SK-N-SH (cell line): ENCODE measurements at regions of chr4 and their contacts with region 1.

Region 1: DNA sequence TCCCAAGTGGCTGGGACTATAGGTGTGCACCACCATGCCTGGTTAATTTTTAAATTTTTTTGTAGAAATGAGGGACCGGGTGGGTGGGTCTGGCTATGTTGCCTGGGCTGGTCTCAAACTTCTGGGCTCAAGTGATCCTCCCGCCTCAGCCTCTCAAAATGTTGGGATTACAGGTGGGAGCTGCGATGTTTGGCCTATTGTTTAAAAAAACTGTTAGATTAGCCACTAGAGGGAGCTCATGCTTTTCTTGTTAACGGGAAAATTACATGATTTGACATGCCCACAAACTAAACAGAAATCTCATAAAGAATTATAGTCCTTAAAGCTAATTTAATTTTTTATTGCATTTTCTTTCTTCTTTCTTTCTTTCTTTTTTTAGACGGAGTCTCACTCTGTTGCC is 5.0 kb upstream of the SDAD1 start:
- DNase-seq: peak; percentile 45
- H3K4me3 ChIP-seq: no peak overlapping the region
- H3K27ac ChIP-seq: no peak overlapping the region
- H3K4me1 ChIP-seq: no peaks in the 10 kb centered on the region
- H3K27me3 ChIP-seq: no peaks in the 10 kb centered on the region
- CTCF ChIP-seq: peak; percentile 76
- EP300 ChIP-seq: no peak
- RAD21 ChIP-seq: peak; percentile 74

Region 2: DNA sequence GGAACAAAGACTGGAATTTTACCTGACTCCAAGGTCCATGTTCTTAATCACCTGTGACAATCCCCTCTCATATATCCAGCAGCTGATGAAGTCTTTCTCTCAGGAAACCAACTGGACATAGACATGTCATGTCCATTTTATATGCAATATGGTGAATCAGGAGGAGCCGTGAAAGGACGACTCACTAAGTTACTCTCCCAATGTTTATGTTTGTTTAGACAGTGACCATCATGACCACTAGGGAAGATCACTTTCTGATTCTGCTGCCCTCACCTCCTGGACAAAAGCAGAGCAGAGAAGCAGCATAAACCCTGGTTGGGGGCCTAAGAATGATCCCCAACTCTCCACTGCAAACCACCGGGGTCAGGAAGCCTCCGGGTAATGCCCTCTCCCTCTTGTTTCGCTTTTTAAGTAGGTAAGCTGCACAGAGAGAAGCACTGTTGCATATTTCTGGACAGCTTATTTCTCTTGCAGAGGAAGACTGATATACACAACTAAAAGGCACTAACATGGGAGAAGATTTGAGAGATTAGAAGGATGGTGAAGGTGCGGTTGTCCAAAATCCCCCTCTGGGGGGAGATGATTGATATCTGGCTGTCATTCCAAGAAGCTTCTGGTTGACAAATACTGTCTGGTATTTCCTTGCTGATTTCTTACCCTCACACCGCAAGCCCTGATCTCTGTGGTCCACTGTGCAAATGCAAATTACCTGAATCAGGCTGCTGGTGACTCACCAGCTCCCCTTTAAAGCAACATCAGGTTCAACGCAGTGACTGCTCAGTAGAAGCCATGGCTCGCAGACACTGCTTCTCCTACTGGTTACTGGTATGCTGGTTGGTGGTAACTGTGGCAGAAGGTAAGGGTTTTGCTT is 440.2 kb before region 1 on chr4 and contains the start of gene ODAPH:
- CTCF ChIA-PET with region 1: no interaction called
- POLR2A ChIA-PET with region 1: no interaction called
- DNase-seq: no peak
- H3K4me3 ChIP-seq: peak within 1 kb of the TSS; percentile 5 to 6; a peak in 1 of 4 replicates
- H3K27ac ChIP-seq: 0 out of 4 replicates have a peak within 1 kb of the TSS, but pooled peaks of 1 of the 2 experiments have one; percentile 11
- H3K4me1 ChIP-seq: no peaks in the 10 kb centered on the region; a peak in 1 of 4 replicates
- H3K27me3 ChIP-seq: peaks cover 4% of the 10 kb centered on the region; the same call in 1 of the 2 replicates
- CTCF ChIP-seq: peak; percentile 45
- EP300 ChIP-seq: no peak
- RAD21 ChIP-seq: no peak
- polyA plus RNA-seq, gene ODAPH: 0.03 and 0.19 TPM in 2 replicates

Region 3: DNA sequence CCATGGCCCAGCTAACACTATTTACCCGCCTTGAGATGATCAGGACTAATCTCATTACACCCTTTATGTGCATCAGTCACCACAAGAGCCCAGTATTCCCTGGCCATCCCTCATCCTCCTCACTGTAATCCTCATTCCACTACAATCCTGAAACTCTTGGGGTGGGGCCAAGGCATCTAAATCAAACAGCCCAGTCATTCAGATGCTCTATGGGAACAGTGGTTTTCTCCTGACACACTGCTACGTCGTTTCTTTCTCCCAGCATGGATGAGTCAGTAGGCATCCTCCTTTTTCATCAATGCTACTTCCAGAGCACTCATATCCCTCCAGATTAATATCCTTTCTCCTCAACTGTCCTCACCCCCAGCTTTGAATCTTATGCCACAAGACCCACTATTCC is 10.6 kb before region 1 on chr4:
- CTCF ChIA-PET with region 1: interaction called, 12 read pairs
- POLR2A ChIA-PET with region 1: no interaction called
- DNase-seq: no peak
- H3K4me3 ChIP-seq: no peak overlapping the region
- H3K27ac ChIP-seq: peak overlapping the region in 1 of 2 experiments; percentile 80; a peak in 2 of 4 replicates
- H3K4me1 ChIP-seq: peaks cover 2 to 11% of the 10 kb centered on the region in 2 experiments; a peak in 2 of 4 replicates
- H3K27me3 ChIP-seq: no peaks in the 10 kb centered on the region
- CTCF ChIP-seq: no peak
- EP300 ChIP-seq: no peak
- RAD21 ChIP-seq: no peak

Region 4: GRCh38 chr4:76023389-76023788 is 27.7 kb after region 1 on chr4 and contains the start of gene CXCL10:
- CTCF ChIA-PET with region 1: interaction called, 11 read pairs
- POLR2A ChIA-PET with region 1: no interaction called
- DNase-seq: no peak
- H3K4me3 ChIP-seq: no peak within 1 kb of the TSS
- H3K27ac ChIP-seq: no peak within 1 kb of the TSS
- H3K4me1 ChIP-seq: no peaks in the 10 kb centered on the region
- H3K27me3 ChIP-seq: no peaks in the 10 kb centered on the region
- CTCF ChIP-seq: no peak
- EP300 ChIP-seq: no peak
- RAD21 ChIP-seq: no peak
- polyA plus RNA-seq, gene CXCL10: not detected in 2 replicates

Region 5: DNA sequence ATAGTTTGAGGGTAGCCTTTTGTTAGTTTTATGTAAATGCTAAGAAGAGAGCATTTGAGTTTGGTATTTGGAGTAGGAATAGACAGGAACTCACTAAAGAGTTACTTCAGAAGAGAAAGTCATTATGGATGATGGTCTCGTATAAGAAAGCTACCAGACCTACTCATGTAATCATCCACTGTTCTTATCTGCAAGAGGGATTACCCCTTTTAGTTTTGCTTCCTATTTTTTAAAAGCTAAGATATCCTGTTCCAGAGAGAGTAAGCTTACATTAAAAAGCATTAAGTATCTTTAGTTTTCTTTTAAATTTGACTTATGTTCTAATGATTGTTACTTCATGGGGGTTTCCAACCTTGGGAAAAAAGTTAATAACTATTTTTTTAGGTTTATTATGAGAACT is 66.3 kb after region 1 on chr4:
- CTCF ChIA-PET with region 1: interaction called, 35 read pairs
- POLR2A ChIA-PET with region 1: no interaction called
- DNase-seq: no peak
- H3K4me3 ChIP-seq: no peak overlapping the region
- H3K27ac ChIP-seq: no peak overlapping the region
- H3K4me1 ChIP-seq: no peaks in the 10 kb centered on the region
- H3K27me3 ChIP-seq: no peaks in the 10 kb centered on the region
- CTCF ChIP-seq: no peak
- EP300 ChIP-seq: no peak
- RAD21 ChIP-seq: no peak

Region 6: GRCh38 chr4:76074468-76074867 is 78.7 kb after region 1 on chr4 and contains the start of gene ART3:
- CTCF ChIA-PET with region 1: interaction called, 15 read pairs
- POLR2A ChIA-PET with region 1: no interaction called
- DNase-seq: no peak
- H3K4me3 ChIP-seq: no peak within 1 kb of the TSS
- H3K27ac ChIP-seq: no peak within 1 kb of the TSS
- H3K4me1 ChIP-seq: no peaks in the 10 kb centered on the region
- H3K27me3 ChIP-seq: no peaks in the 10 kb centered on the region
- CTCF ChIP-seq: no peak
- EP300 ChIP-seq: no peak
- RAD21 ChIP-seq: no peak
- polyA plus RNA-seq, gene ART3: not detected in 2 replicates

Region 7: DNA sequence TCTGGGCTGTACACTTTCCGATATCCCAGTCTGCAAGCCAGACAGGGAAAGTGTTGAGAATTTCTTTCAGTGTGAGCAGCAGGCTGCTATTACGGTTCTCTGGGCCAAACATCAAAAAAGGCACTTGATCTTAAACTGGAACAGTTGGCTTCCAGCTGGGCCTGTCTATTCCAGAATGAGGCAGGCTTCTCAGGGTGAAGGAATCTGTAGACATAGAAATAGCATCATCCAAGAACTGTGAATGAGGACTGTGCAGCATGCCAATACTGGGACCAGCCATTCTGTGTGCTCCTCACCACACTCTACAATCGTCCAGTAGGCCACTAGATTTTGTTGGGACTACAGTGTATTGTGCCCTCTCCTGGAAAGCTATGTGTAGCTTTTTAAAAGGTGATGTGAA is 109.9 kb after region 1 on chr4:
- CTCF ChIA-PET with region 1: interaction called, 16 read pairs
- POLR2A ChIA-PET with region 1: no interaction called
- DNase-seq: no peak
- H3K4me3 ChIP-seq: no peak overlapping the region
- H3K27ac ChIP-seq: no peak overlapping the region
- H3K4me1 ChIP-seq: no peaks in the 10 kb centered on the region
- H3K27me3 ChIP-seq: no peaks in the 10 kb centered on the region
- CTCF ChIP-seq: no peak
- EP300 ChIP-seq: no peak
- RAD21 ChIP-seq: no peak